Gastrocnemius medialis (tissue), 4 donors: ENCODE measurements at regions of chr11 and their contacts with region 1.

Region 1: DNA sequence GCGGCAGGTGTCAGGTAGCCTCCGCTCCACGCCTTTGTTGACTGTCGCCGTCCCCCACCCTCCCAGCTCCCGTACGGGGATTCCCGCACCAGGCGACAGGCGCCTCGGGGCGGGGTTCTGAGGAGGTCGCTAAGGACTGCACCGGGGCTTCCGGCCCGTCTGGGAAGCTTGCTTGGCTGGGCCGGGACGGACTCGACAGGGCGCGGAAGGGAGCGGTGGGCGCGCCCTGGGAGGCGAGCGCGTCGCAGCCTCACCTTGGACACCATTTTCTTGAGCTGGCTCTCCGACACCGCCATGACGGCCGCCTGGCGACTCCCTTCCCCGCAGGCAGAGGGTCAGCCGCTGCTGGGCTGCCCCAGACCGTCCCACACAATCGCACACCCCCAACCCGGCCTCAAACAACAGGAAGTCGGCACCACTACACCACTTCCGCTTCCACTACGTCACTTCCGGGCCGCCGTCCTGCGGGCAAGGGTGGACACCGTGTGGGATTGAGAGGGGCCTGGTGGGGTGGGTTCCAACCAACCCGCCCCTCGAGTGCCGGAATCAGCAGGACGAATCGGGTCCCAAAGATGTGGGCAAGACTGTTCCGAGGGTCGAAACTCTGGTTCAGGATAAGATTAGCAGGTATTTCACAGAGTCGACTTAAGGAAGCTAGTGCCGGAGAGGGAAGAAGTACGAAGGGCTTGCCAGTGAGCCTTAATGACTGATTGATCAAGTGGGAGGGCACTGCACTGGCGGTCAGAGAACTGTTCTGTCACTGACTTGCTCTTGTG is at the start of gene TSG101:
- DNase-seq: peak; percentile 82 to 91
- ATAC-seq: peak; percentile 96 to 98
- H3K4me3 ChIP-seq: peak within 1 kb of the TSS; percentile 70 to 99 (median 97)
- H3K27ac ChIP-seq: peak within 1 kb of the TSS; percentile 91 to 98 (median 96)
- H3K4me1 ChIP-seq: peaks cover 30 to 33% of the 10 kb centered on the region in 2 donors
- H3K27me3 ChIP-seq: no peaks in the 10 kb centered on the region
- CTCF ChIP-seq: no peak
- POLR2A ChIP-seq: peak; percentile 80 to 86
- total RNA-seq, gene TSG101: 106 to 180 (median 170) TPM

Region 2: DNA sequence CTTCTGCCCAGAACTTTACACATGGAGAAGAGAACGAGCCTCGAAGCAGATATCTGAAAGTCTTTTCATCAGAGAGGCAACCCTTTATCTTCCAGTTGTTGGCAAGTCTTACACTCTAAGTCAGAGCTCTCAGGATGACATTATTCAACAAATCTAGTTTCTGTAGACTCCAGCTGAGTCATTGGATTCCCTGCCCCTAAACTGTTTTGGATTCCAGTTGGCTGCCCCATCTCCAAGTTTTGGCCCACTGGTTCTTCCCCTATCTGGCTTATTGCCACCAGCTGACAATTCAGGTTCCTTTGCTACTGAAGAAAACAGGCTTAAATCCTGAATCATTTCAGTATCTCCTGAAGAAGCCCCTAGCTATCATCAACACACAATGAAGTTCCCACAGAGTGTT is 435.0 kb before region 1 on chr11:
- in situ Hi-C with region 1: no loop called
- intact Hi-C with region 1: no loop called
- DNase-seq: no peak
- ATAC-seq: no peak
- H3K4me3 ChIP-seq: no peak overlapping the region
- H3K27ac ChIP-seq: no peak overlapping the region
- H3K4me1 ChIP-seq: no peaks in the 10 kb centered on the region
- H3K27me3 ChIP-seq: no peaks in the 10 kb centered on the region
- CTCF ChIP-seq: no peak
- POLR2A ChIP-seq: no peak

Region 3: GRCh38 chr11:18321980-18322711 is 204.6 kb before region 1 on chr11 and contains the starts of genes GTF2H1 and HPS5:
- in situ Hi-C with region 1: loop called in 1 of 4 experiments (anchors 10 kb)
- intact Hi-C with region 1: loop called (anchors 1 kb)
- DNase-seq: peak; percentile 93 to 95
- ATAC-seq: peak; percentile 99 to 100
- H3K4me3 ChIP-seq: peak within 1 kb of the TSS; percentile 88 to 89 (median 88)
- H3K27ac ChIP-seq: peak within 1 kb of the TSS; percentile 95 to 99 (median 98)
- H3K4me1 ChIP-seq: peaks cover 31 to 37% of the 10 kb centered on the region in 2 donors
- H3K27me3 ChIP-seq: no peaks in the 10 kb centered on the region
- CTCF ChIP-seq: peak in 1 of 5 experiments; percentile 54
- POLR2A ChIP-seq: peak; percentile 53 to 81
- total RNA-seq, gene GTF2H1: 30.9 to 45.6 (median 33.2) TPM
- total RNA-seq, gene HPS5: 5.3 to 13.1 (median 9.7) TPM

Region 4: GRCh38 chr11:18588297-18589252 is 61.9 kb after region 1 on chr11 and contains the start of gene UEVLD:
- in situ Hi-C with region 1: no loop called
- intact Hi-C with region 1: loop called (anchors 1 kb)
- DNase-seq: peak; percentile 81 to 87
- ATAC-seq: peak; percentile 92 to 97
- H3K4me3 ChIP-seq: peak within 1 kb of the TSS; percentile 72 to 91 (median 80)
- H3K27ac ChIP-seq: peak within 1 kb of the TSS; percentile 86 to 91 (median 90)
- H3K4me1 ChIP-seq: peaks cover 41 to 42% of the 10 kb centered on the region in 2 donors
- H3K27me3 ChIP-seq: no peaks in the 10 kb centered on the region
- CTCF ChIP-seq: peak in 1 of 5 experiments; percentile 30
- POLR2A ChIP-seq: peak; percentile 63 to 78
- total RNA-seq, gene UEVLD: 27.4 to 58.8 (median 30.3) TPM

Region 5: DNA sequence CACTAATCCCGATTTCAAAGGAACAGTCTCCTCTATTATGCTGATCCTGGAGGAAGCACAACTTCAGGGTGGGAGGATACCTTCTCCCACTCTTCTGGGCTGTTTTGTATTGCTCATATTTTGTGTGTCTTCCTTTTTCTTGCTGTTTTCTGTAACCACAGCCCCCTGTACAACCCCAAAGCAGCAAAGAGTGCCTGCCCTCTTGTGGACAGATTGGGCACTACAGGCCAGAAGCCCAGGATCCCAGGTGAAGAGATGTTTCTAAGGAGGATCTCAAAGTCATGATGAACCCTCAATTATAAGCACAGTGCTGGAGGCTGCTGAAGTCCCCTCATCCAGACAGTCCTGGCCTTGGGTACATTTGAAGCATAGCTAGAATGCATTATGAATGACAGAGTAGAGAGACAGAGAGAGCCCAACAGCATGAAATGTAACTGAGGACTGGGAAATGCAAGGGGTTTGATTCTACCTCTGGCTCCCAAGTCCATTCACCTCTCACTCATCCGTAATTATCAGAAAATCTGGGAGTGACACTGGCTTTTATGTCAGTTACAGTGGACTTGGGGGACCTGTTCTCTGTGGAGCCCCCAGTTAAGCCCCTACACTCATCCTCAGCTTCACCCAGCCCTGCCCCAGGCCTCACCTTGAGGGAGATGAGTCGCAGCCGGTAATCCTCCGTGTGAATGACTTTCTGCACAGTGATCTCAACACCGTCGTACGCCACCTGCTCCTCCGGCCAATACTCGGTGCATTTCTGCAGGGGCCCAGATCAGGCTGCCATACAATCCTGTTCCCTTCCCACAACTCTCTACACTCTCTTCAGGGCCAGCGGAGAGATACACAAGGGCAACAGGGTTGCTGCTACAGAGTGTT is 205.5 kb after region 1 on chr11:
- in situ Hi-C with region 1: no loop called
- intact Hi-C with region 1: loop called (anchors 5 kb)
- DNase-seq: peak in 1 of 2 donors; percentile 24
- ATAC-seq: peak in 1 of 2 donors; percentile 71
- H3K4me3 ChIP-seq: no peak overlapping the region
- H3K27ac ChIP-seq: no peak overlapping the region
- H3K4me1 ChIP-seq: no peaks in the 10 kb centered on the region
- H3K27me3 ChIP-seq: no peaks in the 10 kb centered on the region
- CTCF ChIP-seq: peak; percentile 65 to 93 (median 81)
- POLR2A ChIP-seq: no peak